Activated CD4-positive, alpha-beta T cell treated with anti-CD3 and anti-CD28 coated beads, Interleukin-2, amount 10 ng/mL, durations not matched to agents 24 days and 14 days (primary cell): ENCODE measurements at regions of chr7 and their contacts with region 1.

Region 1: GRCh38 chr7:55534175-55534915 is 38.0 kb downstream of the VOPP1 start:
- DNase-seq: peak; percentile 93
- H3K4me3 Mint-ChIP-seq: peak overlapping the region; percentile 70
- H3K27ac Mint-ChIP-seq: peak overlapping the region; percentile 99
- H3K4me1 Mint-ChIP-seq: peaks cover 87% of the 10 kb centered on the region
- H3K27me3 Mint-ChIP-seq: peaks cover 2% of the 10 kb centered on the region

Region 2: GRCh38 chr7:54898659-54899340 is 635.5 kb before region 1 on chr7:
- intact Hi-C with region 1: no loop called
- DNase-seq: no peak
- H3K4me3 Mint-ChIP-seq: no peak overlapping the region
- H3K27ac Mint-ChIP-seq: no peak overlapping the region
- H3K4me1 Mint-ChIP-seq: no peaks in the 10 kb centered on the region
- H3K27me3 Mint-ChIP-seq: peaks cover under 1% of the 10 kb centered on the region

Region 3: DNA sequence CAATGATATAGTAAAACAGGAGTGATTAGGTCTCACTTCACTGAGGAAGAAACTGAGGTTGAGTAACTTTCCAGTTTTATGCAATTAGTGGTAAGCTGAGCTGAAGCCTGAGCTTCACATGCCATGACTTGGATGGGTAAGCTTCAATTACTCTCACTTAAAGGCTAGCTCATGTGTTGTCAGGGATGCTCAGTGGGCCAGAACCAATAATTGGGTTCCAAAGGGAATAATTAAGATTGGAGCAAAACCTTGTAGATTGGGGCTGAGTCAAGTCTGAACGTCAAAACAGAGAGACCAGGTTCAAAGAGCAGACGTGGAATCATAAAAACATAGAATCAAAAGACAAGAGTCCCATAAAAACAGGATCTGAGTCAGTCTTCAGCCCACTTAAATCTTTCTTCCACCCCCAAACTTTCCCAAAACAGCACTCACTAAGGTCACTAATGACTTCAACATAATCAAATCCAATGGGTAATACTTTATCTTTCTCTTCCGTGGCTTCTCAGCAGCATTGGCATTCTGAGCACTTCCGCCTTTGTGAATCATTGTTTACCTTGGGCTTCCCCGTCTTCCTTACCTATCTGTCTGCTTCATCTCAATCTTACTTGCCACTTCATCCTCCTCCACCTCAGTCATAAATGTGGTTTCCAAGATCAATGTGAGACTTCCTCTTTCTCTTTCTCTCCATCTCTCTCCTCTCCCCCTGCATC is 538.6 kb before region 1 on chr7:
- intact Hi-C with region 1: loop called (anchors 1 kb)
- DNase-seq: peak; percentile 81
- H3K4me3 Mint-ChIP-seq: peak overlapping the region; percentile 27
- H3K27ac Mint-ChIP-seq: peak overlapping the region; percentile 73
- H3K4me1 Mint-ChIP-seq: peaks cover 30% of the 10 kb centered on the region
- H3K27me3 Mint-ChIP-seq: peaks cover 12% of the 10 kb centered on the region

Region 4: DNA sequence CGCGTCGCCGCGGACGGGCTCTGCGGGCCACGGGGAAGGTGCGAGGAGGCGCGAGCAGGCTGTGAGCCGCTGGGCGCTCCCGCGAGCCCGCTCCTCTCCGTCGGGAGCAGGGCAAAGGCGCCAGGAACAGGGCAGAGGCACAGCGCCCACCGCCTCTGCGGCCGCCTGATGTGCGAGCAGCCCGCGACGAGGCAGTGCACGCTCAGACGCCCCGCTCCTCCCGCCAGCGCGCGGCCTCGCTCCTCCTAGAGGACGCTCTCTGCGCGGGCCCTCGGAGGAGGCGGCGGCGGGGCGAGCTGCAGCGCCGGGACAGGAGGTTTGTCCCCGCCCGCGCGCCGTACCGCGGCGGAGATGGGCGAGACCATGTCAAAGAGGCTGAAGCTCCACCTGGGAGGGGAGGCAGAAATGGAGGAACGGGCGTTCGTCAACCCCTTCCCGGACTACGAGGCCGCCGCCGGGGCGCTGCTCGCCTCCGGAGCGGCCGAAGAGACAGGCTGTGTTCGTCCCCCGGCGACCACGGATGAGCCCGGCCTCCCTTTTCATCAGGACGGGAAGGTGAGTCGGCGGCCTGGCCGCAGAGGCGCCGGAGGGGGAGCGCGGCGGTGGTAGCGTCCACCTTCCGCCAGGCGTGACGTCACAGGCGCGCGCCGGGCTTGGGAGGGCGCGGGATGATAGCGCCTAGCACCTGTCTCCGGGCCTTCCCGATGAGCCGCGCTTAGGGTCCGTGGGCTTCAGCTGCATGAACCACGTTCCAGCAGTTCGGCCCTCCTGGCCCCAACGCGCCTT is 168.5 kb before region 1 on chr7:
- intact Hi-C with region 1: loop called (anchors 1 kb)
- DNase-seq: peak; percentile 98
- H3K4me3 Mint-ChIP-seq: peak overlapping the region; percentile 96
- H3K27ac Mint-ChIP-seq: peak overlapping the region; percentile 96
- H3K4me1 Mint-ChIP-seq: peaks cover 32% of the 10 kb centered on the region
- H3K27me3 Mint-ChIP-seq: peaks cover 1% of the 10 kb centered on the region

Region 5: DNA sequence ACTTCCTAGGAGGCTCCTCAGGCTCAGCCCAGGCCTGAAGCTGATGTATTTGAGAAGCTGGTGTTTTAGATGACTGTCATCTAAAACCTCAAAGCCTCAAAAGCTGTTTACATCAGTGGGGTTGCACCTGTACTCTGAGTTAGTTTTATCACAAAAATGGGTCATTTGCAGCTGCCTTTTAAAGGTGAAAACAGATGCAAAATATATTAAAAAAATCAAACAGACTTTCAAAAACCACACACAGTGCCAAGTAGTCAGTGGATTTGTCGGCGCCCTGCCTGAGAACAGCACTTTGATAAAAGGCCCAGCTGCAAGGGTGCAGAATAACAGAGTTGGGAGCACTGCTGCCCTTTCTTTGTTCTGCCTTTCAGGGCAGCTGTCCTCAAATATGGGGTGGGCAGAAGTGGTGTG is 65.1 kb before region 1 on chr7:
- intact Hi-C with region 1: loop called (anchors 2 kb)
- DNase-seq: peak; percentile 80
- H3K4me3 Mint-ChIP-seq: peak overlapping the region; percentile 34
- H3K27ac Mint-ChIP-seq: peak overlapping the region; percentile 80
- H3K4me1 Mint-ChIP-seq: peaks cover 45% of the 10 kb centered on the region
- H3K27me3 Mint-ChIP-seq: no peaks in the 10 kb centered on the region

Region 6: GRCh38 chr7:55515569-55516279 is 18.6 kb before region 1 on chr7:
- intact Hi-C with region 1: loop called (anchors 1 kb)
- DNase-seq: no peak
- H3K4me3 Mint-ChIP-seq: peak overlapping the region; percentile 5
- H3K27ac Mint-ChIP-seq: peak overlapping the region; percentile 56
- H3K4me1 Mint-ChIP-seq: peaks cover 47% of the 10 kb centered on the region
- H3K27me3 Mint-ChIP-seq: no peaks in the 10 kb centered on the region

Region 7: DNA sequence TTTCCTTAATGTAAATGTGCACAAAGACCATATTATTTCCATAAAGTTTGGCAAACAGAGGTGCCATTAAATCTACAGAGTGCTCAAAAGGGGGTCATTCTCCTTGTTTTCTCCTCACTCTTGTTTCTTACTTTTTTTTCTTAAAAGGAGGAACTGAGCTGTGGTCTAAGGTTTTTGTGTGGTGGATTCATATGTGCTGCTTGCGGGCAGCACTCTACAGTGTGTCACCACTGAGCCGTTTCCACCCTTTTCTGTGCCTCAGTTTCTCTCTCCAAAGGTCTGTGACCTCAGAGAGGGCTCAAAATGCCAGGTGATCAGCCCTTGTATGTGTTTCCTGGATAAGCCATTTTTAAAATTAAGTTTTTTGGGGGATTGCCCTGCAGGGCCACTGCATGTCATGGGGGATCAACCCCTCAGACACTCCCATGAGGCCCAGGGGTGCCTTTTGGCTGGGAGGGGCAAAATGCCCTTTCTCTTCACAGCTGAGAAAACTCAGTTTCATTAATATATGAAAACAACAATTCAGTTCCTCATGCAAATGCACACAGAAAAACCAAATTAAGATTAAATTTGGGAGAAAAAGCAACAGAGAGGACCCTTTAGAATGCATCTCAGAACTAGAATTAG is 94.8 kb after region 1 on chr7:
- intact Hi-C with region 1: no loop called
- DNase-seq: no peak
- H3K4me3 Mint-ChIP-seq: no peak overlapping the region
- H3K27ac Mint-ChIP-seq: no peak overlapping the region
- H3K4me1 Mint-ChIP-seq: no peaks in the 10 kb centered on the region
- H3K27me3 Mint-ChIP-seq: peaks cover 9% of the 10 kb centered on the region